ENCODE measurements at regions of chr7 and their contacts with region 1.

Region 1: GRCh38 chr7:112869111-112869757 is 79.0 kb upstream of the TMEM168 start:
- DNase-seq: peak in 32 of 35 experiments; percentile 4 to 71 (median 33)
- ATAC-seq: peak; percentile 37 to 50 (median 40)
- H3K4me3 ChIP-seq: no peak overlapping the region
- H3K4me3 Mint-ChIP-seq: no peak overlapping the region
- H3K27ac ChIP-seq: no peak overlapping the region
- H3K27ac Mint-ChIP-seq: no peak overlapping the region
- H3K4me1 ChIP-seq: peaks cover 0 to 3% of the 10 kb centered on the region in 2 experiments
- H3K4me1 Mint-ChIP-seq: peaks cover 14 to 52% (median 48%) of the 10 kb centered on the region in 3 donors
- H3K27me3 ChIP-seq: no peaks in the 10 kb centered on the region
- H3K27me3 Mint-ChIP-seq: no peaks in the 10 kb centered on the region

Region 2: GRCh38 chr7:112779667-112780066 is 89.6 kb before region 1 on chr7:
- CTCF ChIA-PET with region 1: no interaction called
- POLR2A ChIA-PET with region 1: interaction called in 1 of 2 experiments, 14 read pairs
- DNase-seq: no peak
- ATAC-seq: no peak
- H3K4me3 ChIP-seq: no peak overlapping the region
- H3K4me3 Mint-ChIP-seq: no peak overlapping the region
- H3K27ac ChIP-seq: no peak overlapping the region
- H3K27ac Mint-ChIP-seq: no peak overlapping the region
- H3K4me1 ChIP-seq: peaks cover 0 to 4% of the 10 kb centered on the region in 2 experiments
- H3K4me1 Mint-ChIP-seq: peaks cover 29 to 40% (median 39%) of the 10 kb centered on the region in 3 donors
- H3K27me3 ChIP-seq: no peaks in the 10 kb centered on the region
- H3K27me3 Mint-ChIP-seq: no peaks in the 10 kb centered on the region

Measured in T-cell (primary cell).